SK-N-SH (cell line): ENCODE measurements at regions of chr17 and their contacts with region 1.

Region 1: GRCh38 chr17:8057691-8058114 is 18.8 kb downstream of the ALOX15B start:
- DNase-seq: peak; percentile 80
- H3K4me3 ChIP-seq: peak overlapping the region; percentile 29 to 50; a peak in 3 of 4 replicates
- H3K27ac ChIP-seq: no peak overlapping the region
- H3K4me1 ChIP-seq: peaks cover 4 to 7% of the 10 kb centered on the region in 2 experiments; a peak in 2 of 4 replicates
- H3K27me3 ChIP-seq: peaks cover 33% of the 10 kb centered on the region
- CTCF ChIP-seq: peak; percentile 75
- EP300 ChIP-seq: no peak
- RAD21 ChIP-seq: peak; percentile 91

Region 2: DNA sequence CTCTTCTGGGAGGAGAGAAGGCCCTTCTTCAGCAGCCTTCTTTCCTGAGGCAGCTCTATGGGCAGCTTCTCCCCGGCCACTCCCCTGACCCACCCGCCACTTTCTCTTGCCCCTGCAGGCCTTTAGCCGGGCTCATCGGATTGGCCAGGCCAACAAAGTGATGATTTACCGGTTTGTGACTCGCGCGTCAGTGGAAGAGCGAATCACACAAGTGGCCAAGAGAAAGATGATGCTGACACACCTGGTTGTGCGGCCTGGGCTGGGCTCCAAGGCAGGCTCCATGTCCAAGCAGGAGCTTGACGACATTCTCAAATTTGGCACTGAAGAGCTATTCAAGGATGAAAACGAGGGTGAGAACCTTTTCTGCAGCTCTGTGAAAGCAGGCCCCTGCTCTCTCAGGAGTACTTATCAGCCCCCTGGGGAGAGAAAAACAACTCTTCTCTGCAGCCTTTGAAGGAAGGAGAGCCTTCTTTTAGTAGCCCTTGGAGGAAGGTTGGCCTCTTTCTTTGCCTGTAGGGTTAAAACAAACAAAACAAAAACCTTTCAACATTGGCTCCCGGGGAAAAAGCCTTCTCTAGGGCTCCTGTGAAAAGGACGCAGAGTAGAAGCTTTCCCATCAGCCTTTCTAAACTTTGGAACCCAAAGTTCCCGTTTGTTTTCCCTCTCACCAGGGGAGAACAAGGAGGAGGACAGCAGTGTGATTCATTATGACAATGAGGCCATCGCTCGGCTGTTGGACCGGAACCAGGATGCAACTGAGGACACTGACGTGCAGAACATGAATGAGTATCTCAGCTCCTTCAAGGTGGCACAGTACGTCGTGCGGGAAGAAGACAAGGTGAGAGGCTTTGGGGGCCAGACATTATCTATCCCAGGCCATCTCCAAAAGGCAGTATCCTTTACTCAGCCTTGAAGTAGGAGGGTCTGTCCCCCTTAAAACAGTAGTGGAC is 154.3 kb before region 1 on chr17:
- CTCF ChIA-PET with region 1: interaction called, 11 read pairs
- POLR2A ChIA-PET with region 1: no interaction called
- DNase-seq: no peak
- H3K4me3 ChIP-seq: no peak overlapping the region
- H3K27ac ChIP-seq: no peak overlapping the region
- H3K4me1 ChIP-seq: no peaks in the 10 kb centered on the region
- H3K27me3 ChIP-seq: no peaks in the 10 kb centered on the region
- CTCF ChIP-seq: no peak
- EP300 ChIP-seq: no peak
- RAD21 ChIP-seq: no peak

Region 3: DNA sequence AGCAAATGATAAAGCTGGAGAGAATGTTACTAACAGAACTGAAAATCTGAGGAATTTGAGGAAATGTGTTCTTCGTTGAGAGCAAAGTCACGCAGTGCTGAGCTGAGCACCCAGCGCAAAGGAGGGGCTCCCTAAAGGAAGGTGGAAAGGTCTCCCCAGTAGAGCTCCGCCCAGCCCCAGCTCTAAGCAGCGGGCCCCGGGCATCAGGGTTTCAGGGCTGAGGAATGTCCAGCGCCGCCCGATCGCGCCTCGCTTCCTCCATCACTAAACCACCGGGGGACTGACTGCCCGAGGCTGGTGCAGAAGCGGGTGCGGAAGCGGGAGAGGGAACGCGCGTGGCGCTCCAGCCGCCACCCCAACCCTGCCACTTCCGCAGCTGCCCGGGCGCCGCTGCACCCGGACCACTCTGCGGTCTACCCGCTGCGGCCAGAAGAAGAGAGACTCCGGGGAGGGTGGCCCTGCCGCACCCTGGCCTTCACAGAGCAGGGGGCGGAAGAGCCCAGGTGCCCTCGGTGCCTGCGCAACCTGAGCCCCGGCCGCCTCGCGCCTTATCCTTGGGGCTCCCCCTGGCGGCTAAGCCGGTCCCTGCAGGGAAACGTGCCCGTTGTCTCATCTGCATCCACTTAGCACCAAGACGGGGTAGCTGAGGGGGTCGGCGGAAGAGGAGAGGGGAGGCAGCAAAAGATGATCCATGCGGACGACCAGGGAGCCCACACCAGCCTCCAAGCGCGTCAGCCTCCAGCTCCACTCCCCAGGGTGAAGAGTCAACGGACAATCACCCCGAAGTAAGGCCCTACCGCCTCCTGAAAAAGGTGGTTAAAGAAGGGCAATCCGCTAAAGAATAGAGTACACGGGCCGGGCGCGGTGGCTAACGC is 67.7 kb before region 1 on chr17:
- CTCF ChIA-PET with region 1: interaction called, 117 read pairs
- POLR2A ChIA-PET with region 1: interaction called, 3 read pairs
- DNase-seq: peak; percentile 93
- H3K4me3 ChIP-seq: peak overlapping the region; percentile 57 to 72
- H3K27ac ChIP-seq: peak overlapping the region in 1 of 2 experiments; percentile 47; a peak in 1 of 4 replicates
- H3K4me1 ChIP-seq: peaks cover 0 to 4% of the 10 kb centered on the region in 2 experiments; a peak in 1 of 4 replicates
- H3K27me3 ChIP-seq: no peaks in the 10 kb centered on the region
- CTCF ChIP-seq: peak; percentile 93
- EP300 ChIP-seq: no peak; a peak in 1 of 4 replicates
- RAD21 ChIP-seq: peak; percentile 59

Region 4: DNA sequence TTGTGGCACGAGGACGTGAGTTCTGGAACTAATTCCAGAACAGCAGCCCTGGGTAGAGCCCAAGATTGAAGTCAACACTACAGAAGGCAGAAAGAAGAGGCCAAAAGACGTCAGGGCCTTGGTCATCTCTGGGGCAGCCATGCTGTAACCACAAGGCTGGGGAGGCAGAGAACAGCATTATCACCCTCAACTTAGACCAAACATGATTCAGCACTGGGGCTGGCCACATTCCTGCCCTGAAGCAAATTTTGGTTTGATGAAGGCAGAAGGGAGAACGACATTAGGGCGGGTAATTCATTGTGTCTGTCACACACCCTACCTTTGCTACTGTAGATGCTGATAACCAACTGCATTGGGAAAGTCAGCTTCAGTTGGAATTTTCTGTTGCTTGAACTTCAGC is 28.6 kb before region 1 on chr17:
- CTCF ChIA-PET with region 1: interaction called, 53 read pairs
- POLR2A ChIA-PET with region 1: no interaction called
- DNase-seq: no peak
- H3K4me3 ChIP-seq: no peak overlapping the region
- H3K27ac ChIP-seq: no peak overlapping the region
- H3K4me1 ChIP-seq: no peaks in the 10 kb centered on the region
- H3K27me3 ChIP-seq: peaks cover 20% of the 10 kb centered on the region
- CTCF ChIP-seq: no peak
- EP300 ChIP-seq: no peak
- RAD21 ChIP-seq: no peak

Region 5: DNA sequence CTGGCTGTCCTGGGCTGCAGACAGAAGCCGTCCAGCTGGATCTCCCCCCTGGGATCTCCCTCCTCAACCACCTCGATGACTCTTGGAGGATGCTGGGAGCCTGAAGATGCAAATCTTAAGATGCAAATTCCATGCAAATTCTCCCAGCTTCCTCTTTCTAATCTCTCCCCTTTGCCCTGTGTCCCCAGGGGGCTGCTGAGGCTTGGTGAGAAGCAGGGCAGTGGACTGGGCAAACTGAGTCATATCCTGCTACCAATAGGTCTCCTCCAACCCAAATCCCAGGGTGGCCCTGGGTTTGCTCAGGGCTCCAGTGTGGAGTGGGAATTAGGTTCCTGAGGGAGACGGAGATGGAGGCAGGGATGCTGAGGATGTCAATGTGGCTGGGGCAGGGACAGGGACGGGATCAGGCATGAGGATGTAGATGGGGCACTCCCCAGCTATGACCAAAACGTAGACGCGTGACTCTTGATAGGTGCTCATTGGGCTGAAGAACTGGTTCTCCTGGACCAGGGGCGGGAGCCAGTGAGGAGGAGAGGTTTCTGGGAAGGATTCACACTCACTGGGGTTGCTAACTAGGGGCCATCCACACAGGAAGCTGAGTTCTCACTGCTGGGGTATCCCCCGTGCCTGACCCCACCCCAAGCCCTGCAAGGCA is 33.5 kb after region 1 on chr17:
- CTCF ChIA-PET with region 1: interaction called, 390 read pairs
- POLR2A ChIA-PET with region 1: no interaction called
- DNase-seq: no peak
- H3K4me3 ChIP-seq: no peak overlapping the region
- H3K27ac ChIP-seq: no peak overlapping the region
- H3K4me1 ChIP-seq: no peaks in the 10 kb centered on the region
- H3K27me3 ChIP-seq: peaks cover 62% of the 10 kb centered on the region; the same call in 1 of the 2 replicates
- CTCF ChIP-seq: no peak
- EP300 ChIP-seq: no peak
- RAD21 ChIP-seq: no peak

Region 6: GRCh38 chr17:8118769-8119580 is 61.3 kb after region 1 on chr17:
- CTCF ChIA-PET with region 1: interaction called, 114 read pairs
- POLR2A ChIA-PET with region 1: no interaction called
- DNase-seq: peak; percentile 87
- H3K4me3 ChIP-seq: peak overlapping the region; percentile 53 to 79
- H3K27ac ChIP-seq: peak overlapping the region; percentile 62 to 63
- H3K4me1 ChIP-seq: peaks cover 0 to 28% of the 10 kb centered on the region in 2 experiments; a peak in 2 of 4 replicates
- H3K27me3 ChIP-seq: peaks cover 23% of the 10 kb centered on the region; the same call in 1 of the 2 replicates
- CTCF ChIP-seq: peak; percentile 94
- EP300 ChIP-seq: no peak; a peak in 1 of 4 replicates
- RAD21 ChIP-seq: peak; percentile 57